ENCODE measurements at regions of chr16 and their contacts with region 1.

Region 1: GRCh38 chr16:6439129-6439528 is 893.5 kb upstream of the RBFOX1 start:
- DNase-seq: no peak
- H3K4me3 ChIP-seq: no peak overlapping the region
- H3K27ac ChIP-seq: no peak overlapping the region
- H3K4me1 ChIP-seq: no peaks in the 10 kb centered on the region
- H3K27me3 ChIP-seq: no peaks in the 10 kb centered on the region

Region 2: GRCh38 chr16:6375465-6376075 is 63.6 kb before region 1 on chr16:
- in situ Hi-C with region 1: loop called (anchors 10 kb)
- DNase-seq: no peak
- H3K4me3 ChIP-seq: no peak overlapping the region
- H3K27ac ChIP-seq: no peak overlapping the region
- H3K4me1 ChIP-seq: no peaks in the 10 kb centered on the region
- H3K27me3 ChIP-seq: no peaks in the 10 kb centered on the region

Region 3: GRCh38 chr16:6643080-6643686 is 204.1 kb after region 1 on chr16:
- in situ Hi-C with region 1: no loop called
- DNase-seq: peak; percentile 57
- H3K4me3 ChIP-seq: no peak overlapping the region
- H3K27ac ChIP-seq: no peak overlapping the region
- H3K4me1 ChIP-seq: no peaks in the 10 kb centered on the region
- H3K27me3 ChIP-seq: peaks cover 6% of the 10 kb centered on the region; the same call in 1 of the 2 replicates

Measured in GM23248 (cell line).